Naive thymus-derived CD4-positive, alpha-beta T cell (primary cell): ENCODE measurements at regions of chr11 and their contacts with region 1.

Region 1: DNA sequence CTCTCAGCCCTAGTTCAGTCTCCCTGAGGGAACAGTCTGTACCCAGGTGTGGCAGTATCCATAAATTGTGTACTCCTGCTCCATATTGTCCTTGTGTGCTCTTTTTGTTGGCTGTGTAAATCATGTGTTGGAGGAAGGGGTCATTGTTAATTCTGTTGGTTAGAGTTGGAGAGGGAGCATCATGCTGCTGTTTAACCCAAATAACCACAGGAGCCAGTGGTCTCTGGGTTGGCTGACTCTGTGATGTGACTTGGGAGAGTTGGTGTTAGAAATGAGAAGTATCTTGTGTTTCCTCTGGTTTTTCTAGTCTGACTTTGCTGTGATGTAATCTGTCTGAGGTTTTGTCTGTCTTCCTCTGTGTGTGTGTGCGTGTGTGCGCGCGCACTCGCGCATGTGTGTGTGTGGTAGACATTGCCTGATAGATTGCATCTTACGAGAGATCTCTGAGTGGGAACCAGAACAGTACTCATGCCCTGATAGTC is 30.5 kb downstream of the CTNND1 start:
- DNase-seq: peak; percentile 69 to 93 (median 90)
- ATAC-seq: peak; percentile 96
- H3K4me3 ChIP-seq: peak overlapping the region; percentile 15
- H3K4me3 Mint-ChIP-seq: peak overlapping the region; percentile 55 to 88 (median 77)
- H3K27ac ChIP-seq: peak overlapping the region; percentile 83
- H3K27ac Mint-ChIP-seq: peak overlapping the region; percentile 90 to 99 (median 99)
- H3K4me1 ChIP-seq: peaks cover 21 to 29% of the 10 kb centered on the region in 2 donors
- H3K4me1 Mint-ChIP-seq: peaks cover 37 to 53% (median 44%) of the 10 kb centered on the region in 7 donors
- H3K27me3 ChIP-seq: no peaks in the 10 kb centered on the region
- H3K27me3 Mint-ChIP-seq: peaks cover 0 to 2% (median 0%) of the 10 kb centered on the region in 5 donors

Region 2: GRCh38 chr11:57335343-57336110 is 456.6 kb before region 1 on chr11 and contains the start of gene SSRP1:
- CTCF ChIA-PET with region 1: no interaction called
- POLR2A ChIA-PET with region 1: no interaction called
- intact Hi-C with region 1: loop called in 1 of 2 experiments (anchors 5 kb)
- DNase-seq: peak; percentile 64 to 90 (median 85)
- ATAC-seq: peak; percentile 99
- H3K4me3 ChIP-seq: peak within 1 kb of the TSS; percentile 77
- H3K4me3 Mint-ChIP-seq: peak within 1 kb of the TSS; percentile 91 to 98 (median 96)
- H3K27ac ChIP-seq: peak within 1 kb of the TSS; percentile 91
- H3K27ac Mint-ChIP-seq: peak within 1 kb of the TSS; percentile 96 to 100 (median 99)
- H3K4me1 ChIP-seq: peaks cover 15 to 19% of the 10 kb centered on the region in 2 donors
- H3K4me1 Mint-ChIP-seq: peaks cover 18 to 44% (median 35%) of the 10 kb centered on the region in 7 donors
- H3K27me3 ChIP-seq: no peaks in the 10 kb centered on the region
- H3K27me3 Mint-ChIP-seq: peaks cover 0 to 2% (median 0%) of the 10 kb centered on the region in 5 donors
- total RNA-seq, gene SSRP1: 46.9 to 146 (median 70.1) TPM

Region 3: DNA sequence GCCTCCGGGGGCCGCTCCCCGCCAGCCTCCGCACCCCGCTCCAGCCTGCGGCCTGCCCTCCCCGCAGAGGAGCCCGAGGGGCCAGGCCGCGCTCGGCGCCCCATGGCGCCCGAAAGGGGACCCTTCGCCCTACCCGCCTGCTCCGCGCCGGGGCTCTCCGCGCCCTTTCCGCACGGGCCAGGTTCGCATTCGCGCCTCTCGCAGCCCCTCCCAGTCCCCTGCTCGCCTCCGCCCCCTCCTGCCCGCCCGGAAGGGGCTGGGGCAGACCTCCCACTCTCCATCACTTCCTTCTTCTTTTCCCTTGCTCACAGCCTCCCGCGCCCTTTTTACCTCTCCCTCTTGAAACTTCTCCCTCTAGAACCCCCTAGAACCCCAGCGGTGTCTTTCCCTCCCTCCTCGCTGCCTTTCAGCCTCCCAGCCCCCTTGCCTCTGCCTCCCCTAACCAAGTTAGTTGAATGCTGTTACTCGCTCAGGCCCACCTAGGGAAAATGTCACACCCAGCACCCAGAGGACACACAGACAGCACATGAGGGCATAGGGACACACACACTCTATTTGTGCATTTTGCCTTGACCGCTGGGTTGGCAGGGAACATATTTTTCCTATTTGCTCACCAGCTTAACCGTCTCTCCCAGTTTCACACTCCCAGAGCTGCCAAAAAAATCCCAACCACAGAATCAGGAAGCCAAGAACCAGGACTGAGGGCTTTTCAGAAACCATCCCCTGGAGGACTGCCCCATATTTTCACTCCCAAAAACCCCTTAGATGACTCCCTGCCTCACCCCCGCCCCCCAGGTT is 365.0 kb before region 1 on chr11 and contains the start of gene SLC43A3:
- CTCF ChIA-PET with region 1: no interaction called
- POLR2A ChIA-PET with region 1: no interaction called
- intact Hi-C with region 1: loop called in 1 of 2 experiments (anchors 5 kb)
- DNase-seq: peak; percentile 18 to 79 (median 38)
- ATAC-seq: peak; percentile 63
- H3K4me3 ChIP-seq: peak within 1 kb of the TSS; percentile 56
- H3K4me3 Mint-ChIP-seq: peak within 1 kb of the TSS; percentile 83 to 92 (median 89)
- H3K27ac ChIP-seq: peak within 1 kb of the TSS; percentile 62
- H3K27ac Mint-ChIP-seq: peak within 1 kb of the TSS; percentile 52 to 93 (median 82)
- H3K4me1 ChIP-seq: peaks cover 24 to 36% of the 10 kb centered on the region in 2 donors
- H3K4me1 Mint-ChIP-seq: peaks cover 40 to 55% (median 50%) of the 10 kb centered on the region in 7 donors
- H3K27me3 ChIP-seq: no peaks in the 10 kb centered on the region
- H3K27me3 Mint-ChIP-seq: peaks cover 0 to 24% (median 0%) of the 10 kb centered on the region in 5 donors
- total RNA-seq, gene SLC43A3: 10.5 to 67.9 (median 12.2) TPM

Region 4: DNA sequence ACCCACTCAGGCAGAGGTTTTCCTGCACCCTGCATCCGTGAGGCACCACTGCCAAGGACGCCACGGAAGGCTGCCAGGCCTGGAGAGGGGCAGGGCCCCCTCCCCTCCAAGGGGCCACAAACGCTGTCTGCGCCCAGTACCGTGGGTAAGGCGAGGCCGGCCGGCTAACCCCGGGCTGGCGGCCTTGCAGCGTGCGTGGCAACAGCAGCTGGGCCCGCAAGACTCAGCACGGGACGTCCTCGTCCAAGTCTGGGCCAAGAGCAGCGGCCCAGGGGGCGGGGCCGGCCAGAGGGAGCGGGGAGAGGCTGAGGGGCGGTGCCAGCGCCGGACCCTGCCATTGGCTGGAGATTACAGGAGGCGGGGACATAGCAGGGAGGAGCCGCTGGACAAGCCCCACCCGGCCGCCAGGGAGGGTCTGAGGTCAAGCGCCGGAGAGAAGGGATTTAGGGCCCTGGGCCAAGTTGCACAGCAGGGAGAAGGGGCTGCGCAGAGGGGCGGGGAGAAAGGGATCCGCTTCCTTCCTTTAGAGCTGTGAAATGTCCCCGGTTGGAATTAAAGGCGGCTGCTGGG is 292.6 kb before region 1 on chr11:
- CTCF ChIA-PET with region 1: no interaction called
- POLR2A ChIA-PET with region 1: no interaction called
- intact Hi-C with region 1: loop called in 1 of 2 experiments (anchors 10 kb)
- DNase-seq: peak in 2 of 9 donors; percentile 26 to 62
- ATAC-seq: peak; percentile 93
- H3K4me3 ChIP-seq: no peak overlapping the region
- H3K4me3 Mint-ChIP-seq: peak overlapping the region in 4 of 10 donors; percentile 1 to 57 (median 25)
- H3K27ac ChIP-seq: no peak overlapping the region
- H3K27ac Mint-ChIP-seq: no peak overlapping the region
- H3K4me1 ChIP-seq: no peaks in the 10 kb centered on the region
- H3K4me1 Mint-ChIP-seq: peaks cover 0 to 7% (median 6%) of the 10 kb centered on the region in 7 donors
- H3K27me3 ChIP-seq: no peaks in the 10 kb centered on the region
- H3K27me3 Mint-ChIP-seq: no peaks in the 10 kb centered on the region

Region 5: GRCh38 chr11:57741132-57742086 is 50.7 kb before region 1 on chr11 and contains the start of gene SELENOH:
- CTCF ChIA-PET with region 1: no interaction called
- POLR2A ChIA-PET with region 1: interaction called, 14 read pairs
- intact Hi-C with region 1: loop called (anchors 1 kb)
- DNase-seq: peak; percentile 75 to 96 (median 91)
- ATAC-seq: peak; percentile 94
- H3K4me3 ChIP-seq: peak within 1 kb of the TSS; percentile 86
- H3K4me3 Mint-ChIP-seq: peak within 1 kb of the TSS; percentile 90 to 100 (median 99)
- H3K27ac ChIP-seq: peak within 1 kb of the TSS; percentile 93
- H3K27ac Mint-ChIP-seq: peak within 1 kb of the TSS; percentile 97 to 100 (median 98)
- H3K4me1 ChIP-seq: peaks cover 16 to 23% of the 10 kb centered on the region in 2 donors
- H3K4me1 Mint-ChIP-seq: peaks cover 12 to 50% (median 41%) of the 10 kb centered on the region in 7 donors
- H3K27me3 ChIP-seq: no peaks in the 10 kb centered on the region
- H3K27me3 Mint-ChIP-seq: no peaks in the 10 kb centered on the region
- total RNA-seq, gene SELENOH: 93.6 to 193 (median 124) TPM

Region 6: DNA sequence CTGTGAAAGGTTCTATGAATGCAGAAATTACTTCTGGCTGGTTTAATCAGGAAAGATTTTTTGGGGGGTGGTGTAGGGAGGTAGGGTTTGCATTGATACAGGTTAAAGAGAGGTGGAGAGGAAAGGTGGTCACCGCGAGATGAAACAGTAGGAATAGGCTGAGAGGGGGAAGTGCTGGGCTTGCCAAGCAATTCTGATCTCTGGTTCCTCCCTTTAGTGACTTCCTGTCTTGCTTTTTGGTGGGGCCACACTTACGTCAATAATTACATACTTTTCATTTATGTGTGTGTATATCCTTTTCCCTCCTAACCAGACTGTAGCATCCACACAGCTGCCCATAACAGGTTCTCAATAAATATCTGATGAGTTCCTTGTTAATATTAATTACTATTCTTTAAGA is 89.5 kb after region 1 on chr11:
- CTCF ChIA-PET with region 1: no interaction called
- POLR2A ChIA-PET with region 1: no interaction called
- intact Hi-C with region 1: no loop called
- DNase-seq: peak in 1 of 9 donors; percentile 1
- ATAC-seq: no peak
- H3K4me3 ChIP-seq: no peak overlapping the region
- H3K4me3 Mint-ChIP-seq: peak overlapping the region in 1 of 10 donors; percentile 51
- H3K27ac ChIP-seq: no peak overlapping the region
- H3K27ac Mint-ChIP-seq: no peak overlapping the region
- H3K4me1 ChIP-seq: no peaks in the 10 kb centered on the region
- H3K4me1 Mint-ChIP-seq: peaks cover 4 to 7% (median 6%) of the 10 kb centered on the region in 7 donors
- H3K27me3 ChIP-seq: no peaks in the 10 kb centered on the region
- H3K27me3 Mint-ChIP-seq: peaks cover 0 to 19% (median 4%) of the 10 kb centered on the region in 5 donors